Stomach (tissue), 19 donors: ENCODE measurements at regions of chr2 and their contacts with region 1.

Region 1: GRCh38 chr2:206800506-206801417 is 35.4 kb downstream of the FASTKD2 start:
- DNase-seq: peak; percentile 53 to 90
- H3K4me3 ChIP-seq: no peak overlapping the region
- H3K27ac ChIP-seq: no peak overlapping the region
- H3K4me1 ChIP-seq: peaks cover 9 to 22% (median 10%) of the 10 kb centered on the region in 4 donors
- H3K27me3 ChIP-seq: no peaks in the 10 kb centered on the region
- CTCF ChIP-seq: peak in 5 of 7 experiments; percentile 48 to 71 (median 48)
- EP300 ChIP-seq: no peak
- POLR2A ChIP-seq: no peak

Region 2: DNA sequence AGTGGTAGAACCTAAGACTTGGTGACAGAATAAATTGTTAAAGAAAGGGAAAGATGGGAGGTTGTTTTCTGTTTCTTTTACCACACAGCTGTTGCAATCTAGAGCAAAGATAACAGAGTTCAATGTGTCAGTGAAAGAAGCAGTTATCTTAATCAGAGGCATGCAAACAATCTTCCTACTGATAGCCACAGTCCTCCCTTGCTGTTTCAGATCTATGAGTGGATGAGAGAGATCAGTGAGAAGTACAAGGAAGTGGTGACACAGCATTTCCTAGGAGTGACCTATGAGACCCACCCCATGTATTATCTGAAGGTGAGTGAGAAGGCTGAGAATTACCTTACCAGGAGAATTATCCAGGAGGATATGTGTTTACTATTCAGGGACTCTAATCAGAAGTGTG is 154.5 kb after region 1 on chr2:
- intact Hi-C with region 1: no loop called
- DNase-seq: no peak
- H3K4me3 ChIP-seq: no peak overlapping the region
- H3K27ac ChIP-seq: no peak overlapping the region
- H3K4me1 ChIP-seq: no peaks in the 10 kb centered on the region
- H3K27me3 ChIP-seq: no peaks in the 10 kb centered on the region
- CTCF ChIP-seq: no peak
- EP300 ChIP-seq: no peak
- POLR2A ChIP-seq: no peak

Region 3: GRCh38 chr2:206981739-206982340 is 181.1 kb after region 1 on chr2:
- intact Hi-C with region 1: loop called (anchors 10 kb)
- DNase-seq: peak; percentile 71 to 89
- H3K4me3 ChIP-seq: no peak overlapping the region
- H3K27ac ChIP-seq: no peak overlapping the region
- H3K4me1 ChIP-seq: peaks cover 0 to 23% (median 11%) of the 10 kb centered on the region in 4 donors
- H3K27me3 ChIP-seq: no peaks in the 10 kb centered on the region
- CTCF ChIP-seq: peak in 5 of 7 experiments; percentile 51 to 72 (median 66)
- EP300 ChIP-seq: no peak
- POLR2A ChIP-seq: no peak

Region 4: GRCh38 chr2:207474863-207475485 is 674.2 kb after region 1 on chr2:
- intact Hi-C with region 1: loop called (anchors 5 kb)
- DNase-seq: peak in 1 of 2 donors; percentile 82
- H3K4me3 ChIP-seq: peak overlapping the region in 2 of 4 donors; percentile 20 to 22
- H3K27ac ChIP-seq: no peak overlapping the region
- H3K4me1 ChIP-seq: peaks cover 0 to 29% (median 15%) of the 10 kb centered on the region in 4 donors
- H3K27me3 ChIP-seq: no peaks in the 10 kb centered on the region
- CTCF ChIP-seq: peak in 5 of 7 experiments; percentile 30 to 87 (median 80)
- EP300 ChIP-seq: no peak
- POLR2A ChIP-seq: no peak

Region 5: GRCh38 chr2:207625018-207625907 is 824.5 kb after region 1 on chr2 and contains the start of gene METTL21A:
- intact Hi-C with region 1: no loop called
- DNase-seq: peak; percentile 92 to 97
- H3K4me3 ChIP-seq: peak within 1 kb of the TSS; percentile 73 to 92 (median 91)
- H3K27ac ChIP-seq: peak within 1 kb of the TSS; percentile 93 to 99 (median 96)
- H3K4me1 ChIP-seq: peaks cover 21 to 44% (median 32%) of the 10 kb centered on the region in 4 donors
- H3K27me3 ChIP-seq: no peaks in the 10 kb centered on the region
- CTCF ChIP-seq: peak in 5 of 7 experiments; percentile 8 to 41 (median 38)
- EP300 ChIP-seq: no peak
- POLR2A ChIP-seq: peak in 1 of 4 donors; percentile 5
- total RNA-seq, gene METTL21A: 13.0 to 42.9 (median 27.5) TPM